ENCODE measurements at regions of chr19 and their contacts with region 1.

Region 1: DNA sequence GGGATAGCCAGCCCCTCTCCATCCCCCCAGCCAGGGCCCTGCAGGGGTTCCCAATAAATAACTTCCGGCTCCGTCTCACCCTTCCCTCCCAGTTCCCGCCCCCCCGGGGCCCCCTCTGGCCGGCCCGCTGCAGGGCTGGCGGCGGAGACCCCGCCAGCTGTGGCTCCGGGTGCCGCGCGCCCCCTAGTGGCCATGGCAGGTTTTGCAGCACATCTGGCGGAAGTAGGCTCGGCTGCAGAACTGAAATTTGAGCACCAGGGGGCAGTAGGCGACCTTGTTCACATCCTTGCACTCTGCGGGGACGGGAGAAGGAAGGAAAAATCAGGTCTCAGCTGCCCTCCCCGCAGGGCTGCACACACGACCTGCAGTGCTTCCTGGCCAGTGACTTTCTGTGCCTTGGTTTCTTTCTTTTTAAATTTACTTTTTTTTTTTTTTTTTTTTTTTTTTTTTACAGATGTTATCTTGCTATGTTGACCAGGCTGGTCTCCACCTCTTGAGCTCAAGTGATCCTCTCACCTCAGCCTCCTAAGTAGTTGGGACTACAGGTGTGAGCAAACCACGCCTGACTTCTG is 3.6 kb upstream of the MYO1F start:
- DNase-seq: peak; percentile 37 to 50
- ATAC-seq: peak in 1 of 2 donors; percentile 41
- H3K4me3 ChIP-seq: no peak overlapping the region
- H3K27ac ChIP-seq: no peak overlapping the region
- H3K4me1 ChIP-seq: no peaks in the 10 kb centered on the region
- H3K27me3 ChIP-seq: peaks cover 0 to 14% (median 11%) of the 10 kb centered on the region in 3 donors
- CTCF ChIP-seq: peak; percentile 70 to 90 (median 82)
- POLR2A ChIP-seq: no peak

Region 2: DNA sequence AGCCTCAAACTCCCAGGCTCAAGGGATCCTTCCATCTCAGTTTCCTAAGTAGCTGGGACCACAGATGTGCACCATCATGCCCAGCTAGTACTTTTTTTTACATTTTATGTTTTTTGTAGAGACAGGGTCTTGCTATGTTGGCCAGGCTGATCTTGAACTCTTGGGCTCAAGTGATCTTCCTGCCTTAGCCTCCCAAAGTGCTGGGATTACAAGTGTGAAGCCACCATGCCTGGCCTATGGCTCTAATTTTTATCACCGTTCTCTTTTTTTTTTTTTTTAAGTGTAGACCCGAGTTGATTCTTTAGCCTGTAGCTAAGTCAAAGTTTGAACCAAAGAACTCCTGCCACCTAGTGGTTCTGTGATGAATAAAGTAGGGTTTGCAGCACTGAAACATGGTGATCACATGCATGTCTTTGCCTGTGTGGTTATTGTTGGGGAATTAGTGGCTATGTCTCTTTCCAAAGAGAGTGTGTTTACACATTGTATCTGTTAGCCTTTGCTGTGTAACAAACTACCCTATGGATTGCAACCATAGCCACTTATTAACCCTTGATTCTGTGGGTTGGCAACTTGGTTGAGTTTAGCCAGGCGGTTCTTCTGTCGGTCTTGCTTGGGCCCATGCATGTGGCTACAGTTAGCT is 61.2 kb after region 1 on chr19:
- in situ Hi-C with region 1: no loop called
- intact Hi-C with region 1: loop called (anchors 10 kb)
- DNase-seq: no peak
- ATAC-seq: no peak
- H3K4me3 ChIP-seq: no peak overlapping the region
- H3K27ac ChIP-seq: no peak overlapping the region
- H3K4me1 ChIP-seq: no peaks in the 10 kb centered on the region
- H3K27me3 ChIP-seq: no peaks in the 10 kb centered on the region
- CTCF ChIP-seq: peak in 3 of 5 experiments; percentile 15 to 47 (median 26)
- POLR2A ChIP-seq: no peak